Mammary epithelial cell (primary cell): ENCODE measurements at regions of chr3 and their contacts with region 1.

Region 1: DNA sequence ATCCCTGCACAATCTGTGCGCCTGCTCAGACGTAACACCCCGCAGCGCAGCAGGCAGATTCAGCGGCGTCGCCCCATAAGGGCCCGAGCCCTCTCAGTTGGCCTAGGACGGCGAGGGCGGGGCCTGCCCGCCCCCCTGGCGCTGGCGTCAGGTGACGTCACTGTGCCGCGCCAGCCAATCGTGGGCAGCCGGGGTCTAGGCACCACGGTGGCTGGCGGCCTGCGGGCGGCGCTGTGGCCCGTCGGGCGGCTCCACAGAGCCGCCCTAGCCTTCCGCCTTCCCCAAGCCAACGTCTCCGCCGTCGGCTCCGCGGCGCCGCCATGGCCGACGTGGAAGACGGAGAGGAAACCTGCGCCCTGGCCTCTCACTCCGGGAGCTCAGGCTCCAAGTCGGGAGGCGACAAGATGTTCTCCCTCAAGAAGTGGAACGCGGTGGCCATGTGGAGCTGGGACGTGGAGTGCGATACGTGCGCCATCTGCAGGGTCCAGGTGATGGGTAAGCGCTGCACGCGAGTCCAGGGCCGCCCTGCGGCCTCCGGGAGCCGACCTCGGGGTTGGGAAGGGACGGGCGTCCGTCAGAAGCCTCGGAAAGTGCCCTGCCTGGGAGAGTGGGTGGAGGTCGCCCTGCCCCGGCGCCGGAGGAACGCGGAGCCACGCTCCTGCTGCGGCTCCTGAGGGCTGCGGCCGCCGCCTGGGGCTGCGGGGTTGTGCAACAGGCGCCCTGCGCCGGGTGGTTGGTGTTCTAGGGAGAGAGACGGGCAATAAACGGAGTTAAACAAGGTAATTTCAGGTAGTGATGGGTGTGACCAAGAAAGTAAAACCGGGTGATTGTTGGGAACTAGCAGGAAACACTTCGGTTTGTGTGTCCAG is at the start of gene RNF7:
- DNase-seq: peak; percentile 95
- H3K4me3 ChIP-seq: peak within 1 kb of the TSS; percentile 94 to 98 (median 95)
- H3K27ac ChIP-seq: peak within 1 kb of the TSS; percentile 82
- H3K4me1 ChIP-seq: peaks cover 13% of the 10 kb centered on the region
- H3K27me3 ChIP-seq: no peaks in the 10 kb centered on the region
- CTCF ChIP-seq: peak; percentile 55 to 91
- total RNA-seq, gene RNF7: 48.3 to 97.7 TPM

Region 2: GRCh38 chr3:141460097-141460704 is 278.1 kb before region 1 on chr3:
- CTCF ChIA-PET with region 1: no interaction called
- dilution Hi-C with region 1: no loop called
- in situ Hi-C with region 1: no loop called
- intact Hi-C with region 1: loop called (anchors 1 kb)
- DNase-seq: peak; percentile 73
- H3K4me3 ChIP-seq: no peak overlapping the region
- H3K27ac ChIP-seq: no peak overlapping the region
- H3K4me1 ChIP-seq: no peaks in the 10 kb centered on the region
- H3K27me3 ChIP-seq: no peaks in the 10 kb centered on the region
- CTCF ChIP-seq: peak; percentile 84 to 88

Region 3: DNA sequence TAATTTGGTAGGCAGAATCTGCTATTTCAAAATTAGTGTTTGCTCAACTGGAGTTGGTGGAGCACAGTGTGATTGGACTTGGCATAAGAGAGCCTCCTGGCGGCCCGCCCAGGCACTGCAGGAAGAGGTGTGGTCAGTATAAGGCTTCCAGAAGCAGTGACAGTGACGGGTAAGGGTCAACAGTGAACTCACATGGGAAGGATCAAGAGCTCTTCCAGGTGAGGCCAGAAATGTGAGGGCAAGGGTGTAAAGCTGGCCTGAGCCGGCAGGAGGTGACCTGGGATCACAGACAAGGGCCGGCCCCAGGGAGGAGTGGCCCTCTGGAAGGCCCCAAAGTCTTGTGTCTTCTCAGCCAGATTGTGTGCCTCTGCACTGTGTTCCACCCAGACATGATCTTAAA is 93.3 kb before region 1 on chr3:
- CTCF ChIA-PET with region 1: no interaction called
- dilution Hi-C with region 1: no loop called
- in situ Hi-C with region 1: no loop called
- intact Hi-C with region 1: loop called (anchors 5 kb)
- DNase-seq: peak; percentile 31
- H3K4me3 ChIP-seq: no peak overlapping the region
- H3K27ac ChIP-seq: no peak overlapping the region
- H3K4me1 ChIP-seq: no peaks in the 10 kb centered on the region
- H3K27me3 ChIP-seq: no peaks in the 10 kb centered on the region
- CTCF ChIP-seq: peak; percentile 86 to 89

Region 4: DNA sequence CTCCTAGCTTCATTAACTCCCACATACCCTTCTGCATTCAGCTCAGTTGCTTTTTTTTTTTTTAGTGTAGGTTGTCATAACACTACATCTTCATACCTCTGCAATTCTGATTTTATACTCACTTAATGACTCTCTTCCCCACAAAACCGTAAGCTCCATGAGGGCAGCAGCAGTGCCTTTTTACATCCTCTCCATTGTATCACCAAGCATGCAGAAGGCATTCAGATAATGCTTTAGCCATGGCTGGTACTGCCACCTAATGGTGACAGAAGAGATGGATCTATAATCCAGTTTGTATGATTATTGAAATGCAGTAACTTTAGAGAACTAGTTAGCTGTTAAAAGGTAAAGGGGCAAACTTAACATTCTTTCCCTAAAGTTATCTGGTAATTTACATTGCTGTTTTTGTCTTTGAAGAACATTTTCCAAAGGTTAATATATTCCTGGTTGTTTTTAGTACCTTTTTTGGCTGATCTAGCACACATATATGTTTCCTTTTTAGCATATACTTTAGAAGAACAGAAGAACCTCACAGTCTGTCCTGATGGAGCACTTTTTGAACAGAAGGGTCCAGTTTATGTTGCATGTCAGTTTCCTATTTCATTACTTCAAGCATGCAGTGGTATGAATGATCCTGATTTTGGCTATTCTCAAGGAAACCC is 175.0 kb after region 1 on chr3:
- CTCF ChIA-PET with region 1: no interaction called
- dilution Hi-C with region 1: no loop called
- in situ Hi-C with region 1: no loop called
- intact Hi-C with region 1: loop called (anchors 1 kb)
- DNase-seq: peak; percentile 42
- H3K4me3 ChIP-seq: no peak overlapping the region
- H3K27ac ChIP-seq: no peak overlapping the region
- H3K4me1 ChIP-seq: no peaks in the 10 kb centered on the region
- H3K27me3 ChIP-seq: no peaks in the 10 kb centered on the region
- CTCF ChIP-seq: peak; percentile 68 to 69

Region 5: GRCh38 chr3:141998669-141999290 is 260.5 kb after region 1 on chr3:
- CTCF ChIA-PET with region 1: no interaction called
- dilution Hi-C with region 1: no loop called
- in situ Hi-C with region 1: no loop called
- intact Hi-C with region 1: loop called (anchors 1 kb)
- DNase-seq: peak; percentile 15
- H3K4me3 ChIP-seq: no peak overlapping the region
- H3K27ac ChIP-seq: no peak overlapping the region
- H3K4me1 ChIP-seq: no peaks in the 10 kb centered on the region
- H3K27me3 ChIP-seq: no peaks in the 10 kb centered on the region
- CTCF ChIP-seq: peak; percentile 42 to 50